Heart right ventricle (tissue), 16 donors: ENCODE measurements at regions of chr2 and their contacts with region 1.

Region 1: GRCh38 chr2:118423776-118424175 is 335.5 kb downstream of the INSIG2 start:
- DNase-seq: no peak
- ATAC-seq: no peak
- H3K4me3 ChIP-seq: no peak overlapping the region
- H3K27ac ChIP-seq: no peak overlapping the region
- H3K4me1 ChIP-seq: no peaks in the 10 kb centered on the region
- H3K27me3 ChIP-seq: peaks cover 0 to 23% (median 5%) of the 10 kb centered on the region in 7 donors
- CTCF ChIP-seq: no peak

Region 2: GRCh38 chr2:117985092-117985491 is 438.7 kb before region 1 on chr2:
- intact Hi-C with region 1: loop called in 1 of 10 experiments (anchors 5 kb)
- DNase-seq: no peak
- ATAC-seq: no peak
- H3K4me3 ChIP-seq: no peak overlapping the region
- H3K27ac ChIP-seq: no peak overlapping the region
- H3K4me1 ChIP-seq: peaks cover 0 to 28% (median 15%) of the 10 kb centered on the region in 9 donors
- H3K27me3 ChIP-seq: no peaks in the 10 kb centered on the region
- CTCF ChIP-seq: no peak